ENCODE measurements at regions of chr19 and their contacts with region 1.

Region 1: GRCh38 chr19:2151339-2152229 is at the start of gene AP3D1:
- DNase-seq: peak; percentile 99 to 100
- H3K4me3 ChIP-seq: peak within 1 kb of the TSS; percentile 68 to 92
- H3K27ac ChIP-seq: peak within 1 kb of the TSS; percentile 73 to 82
- H3K4me1 ChIP-seq: peaks cover 0 to 38% (median 25%) of the 10 kb centered on the region in 4 donors
- H3K27me3 ChIP-seq: no peaks in the 10 kb centered on the region
- CTCF ChIP-seq: peak in 1 of 2 experiments; percentile 5

Region 2: GRCh38 chr19:2084993-2085720 is 66.4 kb before region 1 on chr19:
- intact Hi-C with region 1: no loop called
- DNase-seq: peak in 1 of 2 donors; percentile 65
- H3K4me3 ChIP-seq: no peak overlapping the region
- H3K27ac ChIP-seq: no peak overlapping the region
- H3K4me1 ChIP-seq: peaks cover 0 to 35% (median 19%) of the 10 kb centered on the region in 4 donors
- H3K27me3 ChIP-seq: no peaks in the 10 kb centered on the region
- CTCF ChIP-seq: no peak

Region 3: GRCh38 chr19:2113439-2114211 is 38.0 kb before region 1 on chr19:
- intact Hi-C with region 1: loop called (anchors 5 kb)
- DNase-seq: peak in 1 of 2 donors; percentile 77
- H3K4me3 ChIP-seq: no peak overlapping the region
- H3K27ac ChIP-seq: no peak overlapping the region
- H3K4me1 ChIP-seq: no peaks in the 10 kb centered on the region
- H3K27me3 ChIP-seq: no peaks in the 10 kb centered on the region
- CTCF ChIP-seq: no peak

Region 4: DNA sequence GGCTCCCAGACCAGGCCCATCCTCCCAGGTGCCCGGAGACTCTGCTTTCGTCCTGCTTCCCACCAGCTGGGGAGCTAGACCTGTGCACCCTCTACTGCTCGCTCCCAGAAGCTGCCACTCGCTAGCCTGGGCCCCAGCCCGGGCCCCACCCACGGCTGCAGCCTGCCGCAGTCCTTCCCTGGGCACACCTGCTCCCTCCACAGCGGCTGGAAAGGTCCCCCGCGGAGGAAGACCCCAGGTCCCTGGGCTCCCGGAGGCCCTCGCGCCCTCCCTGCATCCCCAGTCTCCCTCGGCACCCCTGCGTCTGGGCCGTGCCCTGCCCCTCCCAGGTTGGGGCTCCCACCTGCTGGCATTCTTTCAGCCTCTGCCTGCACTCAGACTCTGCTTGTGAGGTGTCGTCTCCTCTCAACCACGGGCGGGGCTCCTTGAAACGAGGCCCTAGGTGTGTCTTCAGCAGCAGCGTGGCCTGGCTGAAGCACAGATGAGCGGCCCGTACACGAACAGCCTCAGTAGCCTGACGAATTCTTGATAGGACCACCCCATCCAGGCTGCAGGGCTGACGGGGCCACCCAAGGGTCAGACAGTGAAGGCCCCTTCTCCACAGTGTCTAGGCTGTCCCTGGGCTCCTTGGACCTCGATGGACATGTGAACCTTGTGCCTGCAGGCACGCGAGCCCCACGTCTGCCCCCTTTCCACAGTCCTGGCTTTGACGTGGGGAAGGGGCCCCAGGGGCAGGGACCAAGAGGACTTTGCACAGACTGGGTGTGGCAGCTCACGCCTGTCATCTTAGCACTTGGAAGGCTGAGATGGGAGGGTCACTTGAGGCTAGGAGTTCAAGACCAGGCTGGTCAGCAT is 40.1 kb after region 1 on chr19:
- intact Hi-C with region 1: loop called (anchors 5 kb)
- DNase-seq: no peak
- H3K4me3 ChIP-seq: no peak overlapping the region
- H3K27ac ChIP-seq: no peak overlapping the region
- H3K4me1 ChIP-seq: peaks cover 6 to 23% (median 16%) of the 10 kb centered on the region in 4 donors
- H3K27me3 ChIP-seq: no peaks in the 10 kb centered on the region
- CTCF ChIP-seq: no peak

Region 5: GRCh38 chr19:2273356-2274184 is 122.0 kb after region 1 on chr19:
- intact Hi-C with region 1: loop called (anchors 5 kb)
- DNase-seq: peak; percentile 54 to 81
- H3K4me3 ChIP-seq: peak overlapping the region; percentile 2 to 10
- H3K27ac ChIP-seq: peak overlapping the region; percentile 25 to 64
- H3K4me1 ChIP-seq: peaks cover 0 to 56% (median 43%) of the 10 kb centered on the region in 4 donors
- H3K27me3 ChIP-seq: no peaks in the 10 kb centered on the region
- CTCF ChIP-seq: peak; percentile 95

Region 6: DNA sequence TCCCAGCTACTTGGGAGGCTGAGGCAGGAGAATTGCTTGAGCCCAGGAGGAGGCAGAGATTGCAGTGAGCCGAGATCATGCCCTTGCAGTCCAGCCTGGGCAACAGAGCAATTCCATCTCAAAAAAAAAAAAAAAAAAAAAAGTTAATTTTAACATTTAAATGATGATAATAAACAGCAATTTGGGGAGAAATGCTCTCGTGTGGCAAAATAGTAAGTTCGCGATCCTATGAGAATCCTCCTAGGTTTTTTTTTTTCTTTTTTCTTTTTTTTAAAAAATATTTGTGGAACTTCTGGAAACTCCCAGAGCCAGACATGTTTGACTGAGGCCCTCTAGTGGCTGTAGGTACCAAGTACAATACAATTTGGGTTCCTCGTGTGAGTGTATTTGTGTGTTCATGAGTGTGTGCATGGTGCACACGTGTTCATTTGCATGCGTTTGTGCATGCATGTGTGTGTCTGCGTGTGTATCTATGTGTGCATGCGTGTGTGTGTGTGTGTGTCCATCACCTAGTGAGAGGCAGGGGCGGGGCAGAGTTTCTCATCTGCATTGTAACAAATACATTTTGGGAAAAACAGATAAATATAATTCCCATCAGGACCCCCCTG is 239.6 kb after region 1 on chr19:
- intact Hi-C with region 1: loop called (anchors 5 kb)
- DNase-seq: no peak
- H3K4me3 ChIP-seq: no peak overlapping the region
- H3K27ac ChIP-seq: no peak overlapping the region
- H3K4me1 ChIP-seq: peaks cover 0 to 11% (median 0%) of the 10 kb centered on the region in 4 donors
- H3K27me3 ChIP-seq: peaks cover 0 to 29% of the 10 kb centered on the region in 2 donors
- CTCF ChIP-seq: peak; percentile 72 to 75

Measured in tibial artery (tissue), 4 donors.